ENCODE measurements at regions of chr1 and their contacts with region 1.

Region 1: GRCh38 chr1:150162862-150163706 is 13.4 kb downstream of the PLEKHO1 start:
- DNase-seq: no peak
- ATAC-seq: peak; percentile 48
- H3K4me3 Mint-ChIP-seq: peak overlapping the region; percentile 49
- H3K27ac Mint-ChIP-seq: peak overlapping the region; percentile 53
- H3K4me1 Mint-ChIP-seq: peaks cover 64% of the 10 kb centered on the region
- H3K27me3 Mint-ChIP-seq: no peaks in the 10 kb centered on the region

Region 2: GRCh38 chr1:150072959-150073358 is 90.1 kb before region 1 on chr1:
- POLR2A ChIA-PET with region 1: interaction called, 20 read pairs
- DNase-seq: no peak
- ATAC-seq: peak; percentile 60
- H3K4me3 Mint-ChIP-seq: no peak overlapping the region
- H3K27ac Mint-ChIP-seq: no peak overlapping the region
- H3K4me1 Mint-ChIP-seq: peaks cover 38% of the 10 kb centered on the region
- H3K27me3 Mint-ChIP-seq: no peaks in the 10 kb centered on the region

Measured in activated naive CD8-positive, alpha-beta T cell treated with anti-CD3 and anti-CD28 coated beads, Interleukin-2, amount 10 ng/mL, durations not matched to agents 7 days and 5 days (primary cell).